ENCODE measurements at regions of chr13 and their contacts with region 1.

Region 1: DNA sequence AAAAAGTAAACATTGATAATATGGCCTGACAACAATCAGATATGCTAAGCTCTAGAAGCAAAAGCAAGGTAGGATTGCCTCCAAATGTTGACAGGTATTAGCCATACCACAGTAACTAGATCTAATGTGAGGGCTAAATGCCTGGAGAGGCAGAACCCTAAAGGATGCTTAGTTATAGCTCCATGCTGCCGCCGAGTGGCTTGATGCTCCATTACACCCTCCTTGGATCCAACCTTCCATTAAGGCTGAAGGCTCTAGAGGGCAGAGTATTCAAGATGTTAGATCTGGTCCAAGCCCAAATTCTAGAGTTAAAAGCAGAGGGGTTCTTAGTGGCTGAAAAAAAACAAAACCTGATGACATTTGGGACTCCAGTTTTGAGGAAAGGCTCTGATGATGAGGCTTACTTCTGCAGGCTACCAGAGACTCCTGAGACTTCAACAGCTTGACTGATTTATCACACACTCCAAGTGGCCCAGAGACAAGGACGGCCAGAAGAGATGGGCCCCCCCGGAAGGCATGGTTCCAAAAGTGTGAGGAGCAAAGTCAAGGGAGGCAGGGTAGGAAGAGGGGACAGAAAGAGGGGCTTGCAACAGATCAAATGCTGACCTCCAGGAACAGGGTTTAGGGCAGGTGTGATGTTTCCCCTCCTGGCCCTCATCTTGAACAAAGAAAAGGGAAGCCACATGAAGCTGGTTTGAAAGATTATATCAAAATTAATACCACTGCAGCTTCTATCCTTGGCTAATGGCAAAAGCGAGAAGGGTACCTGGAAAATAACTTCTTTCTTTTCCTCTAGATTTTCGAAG is 21.9 kb upstream of the CPB2 start:
- DNase-seq: peak; percentile 58 to 72 (median 65)
- H3K4me3 ChIP-seq: no peak overlapping the region
- H3K4me3 Mint-ChIP-seq: peak overlapping the region in 1 of 8 donors; percentile 28
- H3K27ac ChIP-seq: no peak overlapping the region
- H3K27ac Mint-ChIP-seq: peak overlapping the region; percentile 62 to 94 (median 83)
- H3K4me1 ChIP-seq: peaks cover 44% of the 10 kb centered on the region
- H3K4me1 Mint-ChIP-seq: peaks cover 32 to 53% (median 44%) of the 10 kb centered on the region in 4 donors
- H3K27me3 ChIP-seq: no peaks in the 10 kb centered on the region
- H3K27me3 Mint-ChIP-seq: no peaks in the 10 kb centered on the region

Region 2: DNA sequence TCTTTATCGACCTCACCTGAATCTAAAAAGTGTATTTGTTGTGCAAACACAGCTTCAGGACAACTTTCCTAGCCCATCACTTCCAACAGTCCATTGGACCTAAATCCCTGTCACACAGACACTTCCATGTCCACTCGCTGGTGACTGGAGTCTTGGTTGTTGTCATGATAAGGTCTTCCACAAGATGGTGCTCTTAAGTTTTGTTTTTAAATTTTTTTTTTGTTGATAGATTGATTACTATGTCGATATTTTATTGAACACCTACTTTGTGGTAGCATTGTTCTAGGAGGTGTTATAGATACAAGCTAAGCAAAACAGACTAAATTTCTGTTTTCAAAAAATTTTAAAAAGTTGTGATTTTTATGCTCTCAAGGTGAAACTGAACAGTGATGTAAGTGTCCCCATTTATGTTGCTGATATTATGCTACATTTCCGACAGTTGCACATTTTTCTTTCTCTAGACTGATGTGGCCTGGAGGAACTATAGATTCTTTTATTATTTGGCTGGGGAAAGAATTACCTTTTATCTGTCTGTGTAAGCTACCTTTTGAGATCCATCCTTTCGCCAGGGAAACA is 503.2 kb before region 1 on chr13:
- CTCF ChIA-PET with region 1: interaction called, 7 read pairs
- POLR2A ChIA-PET with region 1: no interaction called
- intact Hi-C with region 1: loop called (anchors 1 kb)
- DNase-seq: peak in 4 of 5 donors; percentile 11 to 31 (median 22)
- H3K4me3 ChIP-seq: no peak overlapping the region
- H3K4me3 Mint-ChIP-seq: no peak overlapping the region
- H3K27ac ChIP-seq: no peak overlapping the region
- H3K27ac Mint-ChIP-seq: no peak overlapping the region
- H3K4me1 ChIP-seq: peaks cover 5% of the 10 kb centered on the region
- H3K4me1 Mint-ChIP-seq: peaks cover 0 to 1% (median under 1%) of the 10 kb centered on the region in 4 donors
- H3K27me3 ChIP-seq: peaks cover 6% of the 10 kb centered on the region
- H3K27me3 Mint-ChIP-seq: peaks cover 24 to 39% of the 10 kb centered on the region in 2 donors

Region 3: DNA sequence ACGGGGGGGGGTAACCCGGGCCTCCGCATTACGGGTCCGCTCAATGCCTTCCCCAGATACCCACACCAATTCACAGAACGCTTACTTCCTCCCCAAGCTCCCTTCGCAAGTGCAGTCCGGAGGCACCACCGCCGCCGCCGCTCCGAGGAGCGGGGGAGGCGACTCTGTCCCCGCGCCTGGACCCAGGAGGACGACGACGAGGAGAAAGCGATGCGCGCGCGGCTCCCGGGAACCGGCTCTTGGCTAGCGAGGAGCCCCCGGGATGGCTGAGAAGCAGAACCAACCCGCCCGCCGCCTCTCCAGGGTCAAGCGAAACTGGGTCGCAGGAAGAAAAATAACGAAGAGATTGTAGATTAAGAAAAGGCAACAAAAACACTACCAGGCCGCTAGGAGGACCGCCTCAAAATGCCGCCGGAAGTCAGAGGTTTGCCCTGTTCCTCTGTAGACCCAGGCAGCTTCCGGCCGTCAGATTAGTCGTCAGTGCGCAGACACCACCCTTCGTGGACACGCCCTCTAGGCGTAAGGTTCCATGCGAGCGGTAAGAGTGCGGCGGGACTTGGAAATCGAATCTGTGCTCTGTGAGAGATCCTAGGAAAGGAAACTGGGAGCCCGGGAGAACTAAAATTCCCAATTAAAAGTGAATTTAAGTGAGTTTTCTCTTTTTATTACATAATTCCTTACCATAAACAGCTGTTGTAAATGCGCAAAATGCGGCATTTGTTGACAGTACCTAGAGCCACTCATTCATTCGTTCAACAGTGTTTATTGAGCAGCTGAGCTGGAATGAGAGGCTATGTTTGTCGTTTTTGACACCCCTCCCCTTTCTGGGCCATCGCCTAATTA is 74.2 kb before region 1 on chr13 and contains the start of gene ZC3H13:
- CTCF ChIA-PET with region 1: no interaction called
- POLR2A ChIA-PET with region 1: interaction called, 11 read pairs
- intact Hi-C with region 1: loop called (anchors 1 kb)
- DNase-seq: peak; percentile 91 to 97 (median 93)
- H3K4me3 ChIP-seq: peak within 1 kb of the TSS; percentile 59 to 88
- H3K4me3 Mint-ChIP-seq: peak within 1 kb of the TSS; percentile 88 to 99 (median 95)
- H3K27ac ChIP-seq: peak within 1 kb of the TSS; percentile 95
- H3K27ac Mint-ChIP-seq: peak within 1 kb of the TSS; percentile 93 to 99 (median 98)
- H3K4me1 ChIP-seq: peaks cover 38% of the 10 kb centered on the region
- H3K4me1 Mint-ChIP-seq: peaks cover 28 to 49% (median 37%) of the 10 kb centered on the region in 4 donors
- H3K27me3 ChIP-seq: peaks cover 4% of the 10 kb centered on the region
- H3K27me3 Mint-ChIP-seq: peaks cover 7 to 14% of the 10 kb centered on the region in 2 donors
- total RNA-seq, gene ZC3H13: 55.1 to 65.5 TPM

Region 4: GRCh38 chr13:46160471-46161066 is 33.8 kb after region 1 on chr13:
- CTCF ChIA-PET with region 1: interaction called, 31 read pairs
- POLR2A ChIA-PET with region 1: interaction called, 7 read pairs
- intact Hi-C with region 1: loop called (anchors 5 kb)
- DNase-seq: peak; percentile 54 to 77 (median 73)
- H3K4me3 ChIP-seq: peak overlapping the region; percentile 2 to 23
- H3K4me3 Mint-ChIP-seq: peak overlapping the region; percentile 12 to 87 (median 82)
- H3K27ac ChIP-seq: peak overlapping the region; percentile 73
- H3K27ac Mint-ChIP-seq: peak overlapping the region; percentile 84 to 96 (median 94)
- H3K4me1 ChIP-seq: peaks cover 54% of the 10 kb centered on the region
- H3K4me1 Mint-ChIP-seq: peaks cover 44 to 59% (median 51%) of the 10 kb centered on the region in 4 donors
- H3K27me3 ChIP-seq: no peaks in the 10 kb centered on the region
- H3K27me3 Mint-ChIP-seq: no peaks in the 10 kb centered on the region

Region 5: DNA sequence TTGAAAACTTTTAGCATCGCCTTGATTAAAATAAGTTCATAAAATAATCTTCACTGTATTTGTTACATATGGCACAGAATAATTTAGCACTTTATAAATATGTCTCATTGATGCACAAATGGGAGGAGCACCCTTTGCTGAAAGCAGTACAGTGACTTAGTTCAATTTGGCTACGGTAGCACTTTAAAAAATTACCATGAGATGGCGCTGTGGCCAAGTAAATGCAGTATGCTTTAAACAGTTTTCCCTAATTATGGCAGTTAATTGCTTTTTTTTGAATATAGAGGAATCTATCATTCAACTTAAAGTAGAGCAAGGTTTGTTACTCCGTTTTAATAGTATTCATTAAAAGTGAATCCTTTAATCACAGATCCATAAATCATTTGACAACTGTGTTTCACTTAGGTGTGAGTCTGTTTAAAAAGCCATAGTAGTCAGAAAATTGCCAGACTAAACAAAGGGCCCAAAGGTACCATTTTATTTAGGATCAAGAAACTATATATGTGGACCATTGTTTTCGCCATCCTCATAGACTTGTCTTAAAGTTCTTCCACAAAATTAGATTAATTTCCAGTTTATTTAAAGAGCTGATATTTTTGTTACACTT is 704.9 kb after region 1 on chr13:
- CTCF ChIA-PET with region 1: no interaction called
- POLR2A ChIA-PET with region 1: no interaction called
- intact Hi-C with region 1: no loop called
- DNase-seq: peak in 3 of 5 donors; percentile 10 to 14 (median 11)
- H3K4me3 ChIP-seq: no peak overlapping the region
- H3K4me3 Mint-ChIP-seq: no peak overlapping the region
- H3K27ac ChIP-seq: no peak overlapping the region
- H3K27ac Mint-ChIP-seq: no peak overlapping the region
- H3K4me1 ChIP-seq: no peaks in the 10 kb centered on the region
- H3K4me1 Mint-ChIP-seq: no peaks in the 10 kb centered on the region
- H3K27me3 ChIP-seq: no peaks in the 10 kb centered on the region
- H3K27me3 Mint-ChIP-seq: peaks cover 1 to 6% of the 10 kb centered on the region in 2 donors

Region 6: GRCh38 chr13:47017476-47017875 is 890.7 kb after region 1 on chr13:
- CTCF ChIA-PET with region 1: no interaction called
- POLR2A ChIA-PET with region 1: no interaction called
- intact Hi-C with region 1: no loop called
- DNase-seq: no peak
- H3K4me3 ChIP-seq: no peak overlapping the region
- H3K4me3 Mint-ChIP-seq: no peak overlapping the region
- H3K27ac ChIP-seq: no peak overlapping the region
- H3K27ac Mint-ChIP-seq: no peak overlapping the region
- H3K4me1 ChIP-seq: no peaks in the 10 kb centered on the region
- H3K4me1 Mint-ChIP-seq: no peaks in the 10 kb centered on the region
- H3K27me3 ChIP-seq: no peaks in the 10 kb centered on the region
- H3K27me3 Mint-ChIP-seq: no peaks in the 10 kb centered on the region